Caco-2 (cell line): ENCODE measurements at regions of chr2 and their contacts with region 1.

Region 1: GRCh38 chr2:105114551-105114950 is 76.7 kb downstream of the MRPS9 start:
- DNase-seq: no peak
- H3K4me3 ChIP-seq: no peak overlapping the region
- H3K4me3 Mint-ChIP-seq: no peak overlapping the region
- H3K27ac Mint-ChIP-seq: no peak overlapping the region
- H3K4me1 ChIP-seq: peaks cover 8% of the 10 kb centered on the region
- H3K4me1 Mint-ChIP-seq: peaks cover 6% of the 10 kb centered on the region
- H3K27me3 ChIP-seq: no peaks in the 10 kb centered on the region
- H3K27me3 Mint-ChIP-seq: no peaks in the 10 kb centered on the region
- CTCF ChIP-seq: peak; percentile 68

Region 2: GRCh38 chr2:105179469-105180372 is 65.2 kb after region 1 on chr2:
- CTCF ChIA-PET with region 1: interaction called, 5 read pairs
- POLR2A ChIA-PET with region 1: no interaction called
- intact Hi-C with region 1: loop called (anchors 1 kb)
- DNase-seq: peak in 1 of 2 experiments; percentile 31
- H3K4me3 ChIP-seq: no peak overlapping the region
- H3K4me3 Mint-ChIP-seq: no peak overlapping the region
- H3K27ac Mint-ChIP-seq: no peak overlapping the region
- H3K4me1 ChIP-seq: no peaks in the 10 kb centered on the region
- H3K4me1 Mint-ChIP-seq: peaks cover 7% of the 10 kb centered on the region
- H3K27me3 ChIP-seq: no peaks in the 10 kb centered on the region
- H3K27me3 Mint-ChIP-seq: peaks cover 12% of the 10 kb centered on the region
- CTCF ChIP-seq: peak; percentile 44 to 59

Region 3: GRCh38 chr2:105235388-105236054 is 121.0 kb after region 1 on chr2:
- CTCF ChIA-PET with region 1: interaction called, 9 read pairs
- POLR2A ChIA-PET with region 1: no interaction called
- intact Hi-C with region 1: loop called (anchors 1 kb)
- DNase-seq: peak; percentile 80 to 82
- H3K4me3 ChIP-seq: no peak overlapping the region
- H3K4me3 Mint-ChIP-seq: no peak overlapping the region
- H3K27ac Mint-ChIP-seq: no peak overlapping the region
- H3K4me1 ChIP-seq: no peaks in the 10 kb centered on the region; the same call in 1 of the 2 replicates
- H3K4me1 Mint-ChIP-seq: no peaks in the 10 kb centered on the region
- H3K27me3 ChIP-seq: no peaks in the 10 kb centered on the region
- H3K27me3 Mint-ChIP-seq: no peaks in the 10 kb centered on the region
- CTCF ChIP-seq: peak; percentile 81 to 86

Region 4: GRCh38 chr2:105294844-105295481 is 180.4 kb after region 1 on chr2:
- CTCF ChIA-PET with region 1: interaction called, 3 read pairs
- POLR2A ChIA-PET with region 1: no interaction called
- intact Hi-C with region 1: loop called (anchors 1 kb)
- DNase-seq: peak; percentile 63 to 69
- H3K4me3 ChIP-seq: no peak overlapping the region
- H3K4me3 Mint-ChIP-seq: no peak overlapping the region
- H3K27ac Mint-ChIP-seq: no peak overlapping the region
- H3K4me1 ChIP-seq: no peaks in the 10 kb centered on the region
- H3K4me1 Mint-ChIP-seq: peaks cover 6% of the 10 kb centered on the region
- H3K27me3 ChIP-seq: no peaks in the 10 kb centered on the region
- H3K27me3 Mint-ChIP-seq: no peaks in the 10 kb centered on the region
- CTCF ChIP-seq: peak; percentile 50 to 71